Posterior vena cava (tissue), 2 donors: ENCODE measurements at regions of chr15 and their contacts with region 1.

Region 1: DNA sequence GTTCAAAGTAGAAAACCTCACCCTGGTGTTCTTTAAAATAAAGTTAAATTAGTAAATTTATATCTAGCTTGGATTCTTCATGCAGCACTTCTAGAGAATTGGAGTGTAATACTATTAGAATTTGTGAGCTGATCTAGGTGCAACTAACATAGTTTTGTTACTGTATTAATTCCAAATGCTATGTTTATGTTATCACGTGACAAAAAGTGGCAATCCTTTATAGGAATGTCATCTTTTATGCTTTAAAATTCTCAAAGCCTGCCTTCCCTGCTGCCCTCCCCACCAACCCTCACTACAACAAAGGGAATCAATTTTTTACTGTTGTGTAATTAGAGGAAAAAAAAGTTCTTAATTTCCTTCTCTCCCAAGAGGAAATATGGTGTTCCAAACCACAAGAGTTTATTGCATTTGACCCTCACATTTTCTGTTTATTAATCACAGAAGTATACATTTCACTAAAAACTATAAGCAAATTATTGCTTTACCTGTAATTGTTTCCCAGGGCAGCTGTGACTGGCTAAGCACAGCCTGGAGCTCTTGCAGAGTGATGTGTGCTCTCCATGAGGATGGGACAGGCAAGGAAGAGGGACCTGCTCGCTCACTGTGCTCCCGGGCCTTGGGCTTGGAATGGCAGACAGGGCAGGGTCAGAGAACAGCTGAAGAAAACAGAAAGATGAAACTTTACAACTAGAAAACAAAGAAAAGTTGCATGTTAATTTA is 31.2 kb upstream of the ATP10A start:
- DNase-seq: no peak

Region 2: DNA sequence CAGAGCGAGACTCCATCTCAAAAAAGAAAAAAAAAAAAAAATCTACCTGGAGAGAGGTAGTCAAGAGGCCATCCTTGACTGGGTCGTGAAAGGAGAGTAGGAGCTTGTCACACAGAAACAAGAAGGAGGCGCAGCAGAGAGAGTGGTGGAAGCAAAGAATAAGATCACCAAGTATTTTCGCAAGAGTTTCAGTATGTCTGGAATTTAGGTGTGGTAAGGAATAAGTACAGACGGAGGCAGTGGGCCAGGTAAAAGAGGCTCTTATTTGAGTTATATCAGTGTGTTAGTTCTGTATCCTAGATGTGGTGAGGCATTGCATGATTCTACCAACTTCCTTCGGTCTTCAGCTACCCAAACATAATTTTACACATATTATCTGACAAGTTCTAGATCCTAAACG is 16.7 kb before region 1 on chr15:
- intact Hi-C with region 1: loop called in 1 of 2 experiments (anchors 2 kb)
- DNase-seq: no peak